Gastrocnemius medialis (tissue), 4 donors: ENCODE measurements at regions of chr15 and their contacts with region 1.

Region 1: DNA sequence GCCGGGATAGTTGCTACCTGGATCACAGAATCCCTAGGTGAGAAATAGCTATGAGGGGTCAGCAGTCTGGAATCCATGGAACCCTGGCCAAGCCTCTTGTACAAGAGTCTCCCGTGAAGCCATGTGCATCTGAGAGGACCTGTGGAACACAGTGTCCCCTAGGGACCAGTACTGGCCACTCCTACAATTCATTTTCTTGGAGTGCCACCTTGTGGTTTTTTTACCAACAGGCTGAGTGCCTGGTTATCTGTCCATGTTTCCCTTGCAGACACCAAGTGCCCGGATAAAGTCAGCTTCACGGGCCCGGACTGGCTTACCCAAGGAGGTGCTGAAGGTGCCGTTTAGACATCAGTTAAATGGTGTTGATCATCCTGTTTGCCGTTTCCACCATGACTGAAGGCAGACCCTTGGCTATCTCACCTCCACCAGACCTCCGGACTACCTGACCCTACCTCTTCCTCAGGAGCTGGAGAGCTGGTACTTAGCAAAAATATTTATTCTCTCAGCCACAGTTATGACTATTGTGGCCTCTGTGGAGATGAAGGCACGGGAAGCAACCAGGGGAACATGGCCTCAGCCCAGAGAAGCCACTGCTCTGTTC is 93.9 kb downstream of the RBPMS2 start:
- DNase-seq: peak; percentile 25 to 59
- ATAC-seq: peak; percentile 71 to 93
- H3K4me3 ChIP-seq: no peak overlapping the region
- H3K27ac ChIP-seq: peak overlapping the region in 2 of 4 donors; percentile 11 to 22
- H3K4me1 ChIP-seq: no peaks in the 10 kb centered on the region
- H3K27me3 ChIP-seq: no peaks in the 10 kb centered on the region
- CTCF ChIP-seq: peak; percentile 65 to 75 (median 67)
- POLR2A ChIP-seq: no peak

Region 2: GRCh38 chr15:64209680-64210334 is 471.7 kb before region 1 on chr15:
- in situ Hi-C with region 1: no loop called
- intact Hi-C with region 1: loop called (anchors 1 kb)
- DNase-seq: no peak
- ATAC-seq: no peak
- H3K4me3 ChIP-seq: no peak overlapping the region
- H3K27ac ChIP-seq: no peak overlapping the region
- H3K4me1 ChIP-seq: no peaks in the 10 kb centered on the region
- H3K27me3 ChIP-seq: no peaks in the 10 kb centered on the region
- CTCF ChIP-seq: peak in 4 of 5 experiments; percentile 23 to 43 (median 29)
- POLR2A ChIP-seq: no peak

Region 3: GRCh38 chr15:64412216-64412615 is 269.3 kb before region 1 on chr15:
- in situ Hi-C with region 1: no loop called
- intact Hi-C with region 1: no loop called
- DNase-seq: no peak
- ATAC-seq: no peak
- H3K4me3 ChIP-seq: no peak overlapping the region
- H3K27ac ChIP-seq: no peak overlapping the region
- H3K4me1 ChIP-seq: peaks cover 0 to 14% of the 10 kb centered on the region in 2 donors
- H3K27me3 ChIP-seq: no peaks in the 10 kb centered on the region
- CTCF ChIP-seq: no peak
- POLR2A ChIP-seq: no peak

Region 4: DNA sequence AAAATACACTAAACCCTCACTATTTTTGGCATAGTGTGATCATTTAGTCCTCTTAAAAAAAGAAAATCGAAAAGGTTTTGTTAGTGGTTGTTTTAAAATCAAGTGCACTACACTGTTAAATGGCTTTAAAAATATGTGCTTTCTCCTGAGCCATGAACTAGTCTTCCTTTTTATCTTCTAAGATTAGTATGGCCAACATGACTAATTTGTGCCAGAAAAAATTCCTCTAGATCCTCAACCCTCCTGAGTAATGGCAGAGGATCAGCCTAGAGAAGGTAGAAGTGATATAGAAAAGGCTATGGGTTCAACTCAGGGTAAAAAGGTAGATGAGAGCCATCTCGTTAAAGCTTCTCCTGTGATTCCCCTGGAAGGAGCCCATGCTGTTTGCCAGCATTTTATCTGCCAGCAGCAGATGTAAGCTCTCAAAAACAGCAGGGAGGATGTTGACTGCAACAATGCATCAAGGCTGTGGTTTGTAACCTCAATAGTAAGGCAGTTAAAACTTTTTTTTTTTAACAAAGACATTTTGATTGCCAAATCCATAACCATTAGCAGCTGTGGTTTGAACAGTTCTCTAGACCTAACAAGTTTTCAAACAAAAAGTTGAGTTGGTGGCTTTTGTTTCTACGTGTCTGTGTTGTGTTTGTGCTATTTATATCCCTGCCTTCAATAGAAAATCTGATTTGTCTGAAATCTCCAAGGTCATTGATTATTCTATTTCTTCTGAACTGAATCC is 251.4 kb before region 1 on chr15:
- in situ Hi-C with region 1: no loop called
- intact Hi-C with region 1: loop called (anchors 2 kb)
- DNase-seq: no peak
- ATAC-seq: no peak
- H3K4me3 ChIP-seq: no peak overlapping the region
- H3K27ac ChIP-seq: no peak overlapping the region
- H3K4me1 ChIP-seq: no peaks in the 10 kb centered on the region
- H3K27me3 ChIP-seq: no peaks in the 10 kb centered on the region
- CTCF ChIP-seq: no peak
- POLR2A ChIP-seq: no peak

Region 5: DNA sequence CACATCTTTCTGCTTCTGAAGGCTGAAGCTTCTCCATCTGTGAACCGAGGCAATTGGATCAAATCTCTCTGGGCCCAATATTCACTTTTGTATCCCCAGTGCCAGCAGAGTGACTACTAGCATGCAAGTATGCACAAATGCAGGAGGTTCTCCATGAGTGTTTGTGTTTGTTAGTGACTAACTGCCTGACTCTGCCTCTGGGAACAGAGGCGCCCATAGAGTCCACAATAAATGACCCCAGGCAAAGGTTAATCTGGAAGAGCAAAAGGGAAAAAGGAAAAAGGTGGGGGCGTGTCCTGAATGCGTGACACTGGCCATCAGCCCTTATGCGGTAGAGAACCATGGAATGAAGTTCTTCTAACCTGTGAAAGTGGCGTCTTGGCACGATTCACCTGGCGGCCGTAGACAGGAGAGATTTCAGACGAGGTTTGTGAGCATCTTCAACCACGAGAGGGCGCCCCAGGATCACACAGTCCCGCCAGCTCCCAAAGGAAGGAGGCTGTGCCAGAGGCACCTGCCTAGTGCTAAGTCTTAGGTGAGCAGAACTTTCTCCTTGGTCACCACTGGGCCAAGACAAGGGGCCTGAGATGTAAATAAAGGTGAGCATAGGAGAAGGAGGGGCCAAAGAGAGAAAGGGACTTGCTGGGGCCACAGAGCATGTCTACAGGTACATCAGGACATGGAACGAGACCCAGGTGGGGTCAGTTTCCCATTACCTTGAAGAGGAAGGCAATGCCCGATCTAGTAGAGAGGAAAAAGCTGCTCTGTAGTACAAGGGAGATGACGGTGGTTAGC is 49.7 kb after region 1 on chr15:
- in situ Hi-C with region 1: loop called (anchors 5 kb)
- intact Hi-C with region 1: loop called (anchors 1 kb)
- DNase-seq: peak; percentile 64 to 81
- ATAC-seq: peak; percentile 71 to 88
- H3K4me3 ChIP-seq: no peak overlapping the region
- H3K27ac ChIP-seq: no peak overlapping the region
- H3K4me1 ChIP-seq: no peaks in the 10 kb centered on the region
- H3K27me3 ChIP-seq: no peaks in the 10 kb centered on the region
- CTCF ChIP-seq: peak; percentile 90 to 96 (median 93)
- POLR2A ChIP-seq: no peak

Region 6: DNA sequence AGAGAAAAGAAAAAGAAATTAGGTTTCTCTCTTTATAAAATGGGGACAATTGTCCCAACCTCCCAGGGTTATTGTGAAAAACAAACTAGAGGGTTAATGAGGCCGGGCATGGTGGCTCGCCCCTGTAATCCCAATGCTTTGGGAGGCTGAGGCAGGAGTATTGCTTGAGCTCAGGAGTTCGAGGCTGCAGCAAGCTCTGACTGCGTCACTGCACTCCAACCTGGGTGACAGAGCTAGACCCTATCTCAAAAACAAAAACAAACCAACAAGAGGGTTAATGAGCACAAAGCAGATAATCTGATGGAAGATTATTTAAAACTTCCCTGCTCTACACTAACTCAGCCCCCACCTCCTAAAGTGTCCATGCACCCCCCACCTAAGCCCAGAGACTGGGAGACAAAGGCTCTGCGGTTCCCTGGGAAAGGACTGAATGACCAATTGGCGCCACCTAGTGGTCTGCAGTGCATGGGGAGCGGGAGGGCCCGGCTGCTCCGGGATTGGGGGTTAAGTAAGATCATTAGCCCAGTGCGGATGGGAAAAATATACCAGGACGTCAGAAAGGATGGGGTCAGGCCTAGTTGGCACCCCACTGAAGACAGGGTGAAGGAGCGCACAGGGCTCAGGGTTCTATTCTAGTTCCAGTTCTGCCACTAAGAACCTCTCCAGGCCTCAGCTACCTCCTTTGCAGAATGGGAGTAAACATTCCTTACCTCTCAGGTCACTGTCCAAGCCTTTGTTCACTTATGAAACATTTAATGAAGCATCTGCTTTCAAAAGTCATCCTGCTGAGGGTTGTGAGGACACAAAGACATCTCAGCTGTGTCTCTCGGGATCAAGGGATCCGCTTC is 128.3 kb after region 1 on chr15:
- in situ Hi-C with region 1: no loop called
- intact Hi-C with region 1: loop called (anchors 5 kb)
- DNase-seq: peak; percentile 54 to 55
- ATAC-seq: peak; percentile 80 to 88
- H3K4me3 ChIP-seq: no peak overlapping the region
- H3K27ac ChIP-seq: no peak overlapping the region
- H3K4me1 ChIP-seq: no peaks in the 10 kb centered on the region
- H3K27me3 ChIP-seq: no peaks in the 10 kb centered on the region
- CTCF ChIP-seq: peak; percentile 63 to 95 (median 92)
- POLR2A ChIP-seq: no peak